ENCODE measurements at regions of chr5 and their contacts with region 1.

Region 1: DNA sequence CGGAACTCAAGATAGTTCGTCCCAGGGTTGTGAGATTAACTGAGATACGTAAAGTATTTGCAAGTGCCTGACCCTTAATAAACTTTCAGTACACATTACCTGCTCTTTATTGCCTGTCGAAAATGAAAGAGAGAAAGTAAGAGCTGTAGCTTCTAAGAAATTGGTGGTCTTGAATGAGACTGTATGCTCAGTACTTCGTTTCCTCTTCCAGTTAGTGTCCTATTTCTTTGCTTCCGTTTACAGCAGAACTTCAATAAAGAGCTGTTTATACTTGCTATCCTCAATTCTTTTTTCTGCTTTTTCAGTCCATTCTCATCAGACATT is 534 bp downstream of the SRFBP1 start:
- DNase-seq: no peak
- H3K4me3 Mint-ChIP-seq: peak overlapping the region; percentile 95
- H3K27ac Mint-ChIP-seq: peak overlapping the region; percentile 75
- H3K4me1 Mint-ChIP-seq: peaks cover 36% of the 10 kb centered on the region
- H3K27me3 Mint-ChIP-seq: peaks cover 2% of the 10 kb centered on the region

Region 2: DNA sequence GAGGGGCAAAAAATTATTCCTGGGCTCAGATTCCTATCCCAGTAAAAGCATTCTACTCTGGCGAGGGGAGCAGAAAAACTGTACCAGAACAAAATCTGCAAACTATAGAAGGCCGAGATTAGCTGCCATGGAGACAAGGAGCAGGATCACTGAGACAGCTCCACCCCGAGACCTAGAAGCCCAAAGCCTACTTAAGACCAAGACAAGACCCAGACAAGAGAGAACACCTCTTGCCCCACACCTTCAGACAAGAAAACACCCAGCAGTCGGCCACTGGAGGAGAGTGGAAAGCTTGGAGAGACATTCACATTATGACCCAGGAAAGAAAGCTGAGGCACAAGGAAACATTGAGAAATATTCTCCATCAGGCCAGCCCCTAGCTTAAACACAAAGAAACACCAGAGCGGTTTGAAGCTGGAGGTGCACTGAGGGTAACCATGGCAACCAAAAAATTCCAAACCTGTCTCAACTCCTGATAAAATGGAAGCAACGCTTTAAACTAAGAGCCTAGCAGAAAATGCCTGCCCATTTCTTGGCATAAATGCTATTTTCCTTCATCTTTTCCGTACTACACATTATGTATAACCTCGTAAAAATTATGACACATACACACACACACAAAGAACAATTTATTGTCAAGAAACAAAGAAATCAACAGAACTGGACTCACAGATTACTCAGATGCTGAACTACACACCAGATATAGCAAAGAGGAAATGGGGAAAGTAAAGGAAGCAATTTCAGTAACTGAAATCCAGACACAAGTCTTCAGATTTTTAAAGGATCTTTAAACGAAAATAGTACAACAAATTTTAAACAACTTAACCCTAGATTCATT is 164.4 kb before region 1 on chr5:
- CTCF ChIA-PET with region 1: no interaction called
- POLR2A ChIA-PET with region 1: no interaction called
- DNase-seq: no peak
- H3K4me3 Mint-ChIP-seq: no peak overlapping the region
- H3K27ac Mint-ChIP-seq: no peak overlapping the region
- H3K4me1 Mint-ChIP-seq: no peaks in the 10 kb centered on the region
- H3K27me3 Mint-ChIP-seq: no peaks in the 10 kb centered on the region

Region 3: DNA sequence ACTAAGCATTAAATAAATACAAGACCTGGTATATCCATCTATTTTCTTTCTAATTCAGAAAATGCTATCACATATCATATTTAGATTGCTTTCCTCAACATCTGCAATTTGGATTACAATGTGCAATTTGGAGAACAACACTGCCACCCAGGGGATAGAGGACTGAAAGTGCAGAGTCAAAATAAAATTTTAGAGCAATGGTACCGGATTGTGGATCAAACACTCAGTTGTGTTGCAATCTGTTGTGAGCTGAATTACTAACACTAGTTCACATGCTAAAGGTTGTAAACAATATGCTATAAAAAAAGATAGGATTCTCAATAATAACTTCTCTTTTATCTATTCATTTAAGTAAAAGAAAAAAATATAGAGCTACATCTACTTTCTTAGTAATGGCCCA is 12.4 kb before region 1 on chr5:
- CTCF ChIA-PET with region 1: interaction called, 16 read pairs
- POLR2A ChIA-PET with region 1: interaction called, 3 read pairs
- DNase-seq: no peak
- H3K4me3 Mint-ChIP-seq: no peak overlapping the region
- H3K27ac Mint-ChIP-seq: no peak overlapping the region
- H3K4me1 Mint-ChIP-seq: no peaks in the 10 kb centered on the region
- H3K27me3 Mint-ChIP-seq: no peaks in the 10 kb centered on the region